PC-9 (cell line): ENCODE measurements at regions of chr2 and their contacts with region 1.

Region 1: GRCh38 chr2:61959381-61960293 is 54.2 kb downstream of the COMMD1 start:
- DNase-seq: no peak
- H3K4me3 ChIP-seq: no peak overlapping the region
- H3K27ac ChIP-seq: no peak overlapping the region
- H3K4me1 ChIP-seq: no peaks in the 10 kb centered on the region
- H3K27me3 ChIP-seq: no peaks in the 10 kb centered on the region
- CTCF ChIP-seq: no peak

Region 2: GRCh38 chr2:61978522-61978921 is 18.9 kb after region 1 on chr2:
- CTCF ChIA-PET with region 1: no interaction called
- POLR2A ChIA-PET with region 1: interaction called, 18 read pairs
- intact Hi-C with region 1: no loop called
- DNase-seq: no peak
- H3K4me3 ChIP-seq: no peak overlapping the region
- H3K27ac ChIP-seq: no peak overlapping the region
- H3K4me1 ChIP-seq: no peaks in the 10 kb centered on the region
- H3K27me3 ChIP-seq: no peaks in the 10 kb centered on the region
- CTCF ChIP-seq: no peak